AG04450 (cell line): ENCODE measurements at regions of chr2 and their contacts with region 1.

Region 1: GRCh38 chr2:85772019-85772745 is 18.4 kb downstream of the ATOH8 start:
- DNase-seq: peak; percentile 100
- H3K4me3 ChIP-seq: peak overlapping the region; percentile 25
- H3K27ac ChIP-seq: peak overlapping the region; percentile 97
- H3K27me3 ChIP-seq: no peaks in the 10 kb centered on the region
- CTCF ChIP-seq: peak; percentile 30; the same call in 1 of the 2 replicates

Region 2: DNA sequence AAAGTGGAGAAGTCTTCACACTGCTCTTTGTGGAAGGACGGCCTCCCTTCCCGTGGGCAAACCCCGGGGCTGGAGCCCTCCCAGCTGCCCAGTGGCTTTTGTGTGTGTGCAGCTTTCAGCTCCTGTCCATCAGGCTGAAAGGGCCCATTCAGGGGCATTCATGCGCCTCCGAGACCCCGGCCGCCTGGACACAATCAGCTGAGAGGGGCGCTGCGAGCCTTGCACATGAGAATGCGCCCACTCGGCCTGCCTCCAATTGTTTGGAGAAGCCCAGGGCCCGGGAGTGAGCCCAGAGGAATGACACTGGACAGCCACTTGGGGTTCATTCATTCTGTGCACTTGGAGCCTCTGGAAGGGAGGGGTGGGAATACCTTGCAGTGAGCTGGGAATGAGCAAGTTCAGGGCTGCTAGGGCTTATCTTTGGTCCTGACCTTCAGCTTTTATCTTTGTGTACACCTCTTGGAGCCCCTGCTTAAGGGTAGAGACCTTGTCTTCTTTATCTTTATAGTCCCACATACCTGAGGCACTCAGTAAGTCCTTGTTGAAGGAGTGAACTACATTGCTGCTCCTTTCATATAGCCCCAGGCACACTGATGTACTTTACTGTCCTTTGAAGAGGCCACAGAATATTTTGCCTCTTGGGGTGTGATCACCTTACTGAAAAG is 582.4 kb before region 1 on chr2:
- CTCF ChIA-PET with region 1: no interaction called
- POLR2A ChIA-PET with region 1: no interaction called
- DNase-seq: no peak
- H3K4me3 ChIP-seq: no peak overlapping the region
- H3K27ac ChIP-seq: no peak overlapping the region
- H3K27me3 ChIP-seq: no peaks in the 10 kb centered on the region
- CTCF ChIP-seq: no peak

Region 3: DNA sequence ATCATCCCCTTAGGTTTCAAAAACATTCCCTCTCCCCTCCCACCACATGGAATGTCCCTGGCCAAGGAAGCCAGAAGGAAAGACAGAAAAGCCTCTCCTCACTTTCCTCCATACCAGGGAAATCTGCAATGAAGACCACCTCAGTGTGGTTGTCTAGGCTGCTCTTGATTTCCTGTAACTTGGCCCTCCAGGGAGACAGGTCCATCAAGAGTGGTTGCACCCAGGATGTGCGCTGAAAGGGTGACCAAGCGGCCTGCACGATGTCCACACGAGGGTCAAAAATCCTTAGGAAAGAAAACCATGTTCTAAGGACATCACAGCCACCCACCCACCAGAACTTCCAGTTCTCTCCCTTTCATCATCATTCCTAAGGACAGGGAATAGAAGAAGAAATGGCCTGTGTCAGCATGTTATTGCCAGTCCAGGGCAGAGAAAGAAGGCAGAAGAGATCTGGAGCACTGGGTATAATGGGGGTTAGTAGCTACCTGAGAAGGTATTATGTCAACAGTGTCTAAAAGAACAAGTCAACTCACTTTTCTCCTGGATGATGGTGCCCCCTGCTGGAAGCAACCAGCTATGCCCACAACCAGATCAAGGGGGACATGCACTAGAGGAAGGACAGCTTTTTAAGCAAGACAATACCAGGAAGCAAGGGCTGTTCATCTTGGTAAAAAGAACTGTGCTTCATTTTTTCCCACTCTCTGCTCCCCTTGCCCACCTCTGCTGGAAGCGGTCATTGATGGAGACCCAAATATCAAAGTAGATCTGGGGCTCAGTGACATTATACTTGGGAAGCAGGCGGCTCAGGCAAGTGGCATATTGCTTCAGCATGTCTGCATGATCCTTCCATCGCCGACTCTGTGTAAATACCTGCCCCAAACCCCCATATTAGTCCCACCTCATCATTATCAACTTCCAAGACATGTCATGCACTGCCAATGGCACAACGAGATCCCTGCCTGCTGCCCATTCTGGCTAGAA is 220.2 kb before region 1 on chr2:
- CTCF ChIA-PET with region 1: no interaction called
- POLR2A ChIA-PET with region 1: no interaction called
- DNase-seq: no peak
- H3K4me3 ChIP-seq: no peak overlapping the region
- H3K27ac ChIP-seq: no peak overlapping the region
- H3K27me3 ChIP-seq: no peaks in the 10 kb centered on the region
- CTCF ChIP-seq: peak; percentile 93

Region 4: DNA sequence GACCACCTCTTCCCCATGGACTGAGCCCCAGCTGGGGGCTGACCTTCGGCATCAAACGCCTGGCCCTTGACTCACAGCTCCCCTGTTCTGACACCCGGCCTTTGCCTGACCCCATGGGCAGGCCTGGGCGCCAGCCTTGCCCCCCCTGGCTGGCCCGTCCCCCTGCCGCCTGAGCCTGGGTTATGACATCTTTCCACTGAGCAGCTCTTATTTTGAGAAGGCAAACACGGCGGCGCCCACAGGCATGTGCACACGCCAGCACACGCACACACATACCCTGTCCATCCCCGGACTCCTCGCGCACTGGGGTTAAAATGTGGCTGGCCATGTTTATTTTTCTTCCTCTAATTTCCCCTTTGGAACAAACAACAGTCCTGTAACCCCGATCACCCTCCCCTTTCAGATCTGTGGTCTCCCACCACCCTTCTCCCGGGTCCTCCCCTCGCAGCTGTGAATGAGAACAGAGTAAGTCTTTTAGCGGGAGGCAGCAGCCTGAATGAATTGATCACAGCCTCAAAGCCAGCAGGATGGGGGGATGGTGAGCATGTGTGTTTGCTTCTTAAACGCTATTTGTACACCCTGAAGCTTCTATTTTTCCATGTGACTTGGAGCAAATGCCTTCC is 30.2 kb before region 1 on chr2:
- CTCF ChIA-PET with region 1: interaction called, 5 read pairs
- POLR2A ChIA-PET with region 1: interaction called, 75 read pairs
- DNase-seq: peak; percentile 89
- H3K4me3 ChIP-seq: peak overlapping the region; percentile 32
- H3K27ac ChIP-seq: peak overlapping the region; percentile 97
- H3K27me3 ChIP-seq: no peaks in the 10 kb centered on the region
- CTCF ChIP-seq: no peak; the same call in 1 of the 2 replicates

Region 5: DNA sequence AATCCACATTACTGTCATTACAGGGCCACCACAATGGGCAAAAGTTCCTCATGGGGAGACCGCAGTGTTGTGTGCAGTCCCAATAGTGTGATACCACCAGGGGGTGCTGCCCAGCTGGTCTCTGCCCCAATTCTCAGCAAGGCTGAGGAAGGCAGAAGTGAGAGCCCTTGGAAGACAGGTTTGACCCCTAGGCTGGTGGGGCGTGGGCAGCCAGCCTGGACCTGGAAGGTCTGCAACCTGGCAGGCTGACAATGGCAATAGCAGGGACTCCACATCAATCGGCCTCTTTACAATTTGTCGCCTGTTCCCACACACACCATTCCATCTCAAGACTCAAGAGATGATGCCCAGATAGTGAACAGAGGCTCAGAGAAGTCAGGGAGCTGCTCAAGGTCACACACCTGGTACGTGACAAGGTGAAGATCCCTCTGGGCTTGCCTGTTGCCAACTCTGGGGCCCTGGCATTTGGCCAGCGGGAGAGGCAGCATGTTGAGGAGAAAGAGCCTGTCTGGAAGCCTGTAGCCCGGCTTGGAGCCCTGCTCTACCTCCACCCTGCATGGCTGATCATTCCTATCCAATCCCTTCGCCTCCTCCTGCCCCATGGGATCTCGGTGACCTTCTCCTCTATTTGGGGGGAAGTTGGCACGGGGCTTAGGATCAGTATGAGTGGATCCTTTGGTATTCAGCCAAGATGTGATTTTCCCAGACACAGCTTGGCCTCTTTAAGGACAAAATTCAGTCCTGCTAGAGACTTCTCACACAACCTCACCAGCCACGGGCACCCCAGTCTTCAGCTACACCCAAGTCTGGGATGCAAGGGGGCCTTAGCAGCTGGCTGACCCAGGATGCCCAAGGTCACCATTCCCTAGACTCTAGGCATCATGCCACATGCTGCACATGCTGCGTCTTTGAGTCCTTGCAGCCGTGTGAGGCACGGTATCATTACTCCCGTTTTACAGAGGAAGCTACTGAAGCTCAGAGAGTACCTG is 21.3 kb before region 1 on chr2:
- CTCF ChIA-PET with region 1: interaction called, 10 read pairs
- POLR2A ChIA-PET with region 1: interaction called, 22 read pairs
- DNase-seq: no peak
- H3K4me3 ChIP-seq: no peak overlapping the region
- H3K27ac ChIP-seq: no peak overlapping the region
- H3K27me3 ChIP-seq: peaks cover 5% of the 10 kb centered on the region
- CTCF ChIP-seq: peak; percentile 86

Region 6: DNA sequence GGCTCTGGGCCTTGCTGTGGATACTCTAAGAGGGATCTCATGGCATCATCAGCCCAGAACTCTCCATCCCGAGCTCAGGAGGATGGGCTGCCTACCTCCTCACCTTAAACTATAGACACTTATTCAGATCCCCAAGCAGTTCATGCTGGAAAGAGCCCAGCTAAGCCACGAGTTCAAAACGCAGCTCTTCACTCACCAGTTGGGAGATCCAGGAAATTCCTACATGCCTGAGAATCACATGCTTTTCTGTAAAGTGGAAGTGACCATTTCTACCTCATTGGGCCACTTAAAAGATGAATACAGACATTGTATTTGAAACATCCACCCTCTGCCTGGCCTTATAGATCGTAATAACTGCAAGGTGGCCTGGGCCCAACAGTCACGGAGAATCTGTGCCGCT is 11.8 kb before region 1 on chr2:
- CTCF ChIA-PET with region 1: no interaction called
- POLR2A ChIA-PET with region 1: interaction called, 19 read pairs
- DNase-seq: no peak
- H3K4me3 ChIP-seq: no peak overlapping the region
- H3K27ac ChIP-seq: no peak overlapping the region
- H3K27me3 ChIP-seq: no peaks in the 10 kb centered on the region
- CTCF ChIP-seq: no peak

Region 7: DNA sequence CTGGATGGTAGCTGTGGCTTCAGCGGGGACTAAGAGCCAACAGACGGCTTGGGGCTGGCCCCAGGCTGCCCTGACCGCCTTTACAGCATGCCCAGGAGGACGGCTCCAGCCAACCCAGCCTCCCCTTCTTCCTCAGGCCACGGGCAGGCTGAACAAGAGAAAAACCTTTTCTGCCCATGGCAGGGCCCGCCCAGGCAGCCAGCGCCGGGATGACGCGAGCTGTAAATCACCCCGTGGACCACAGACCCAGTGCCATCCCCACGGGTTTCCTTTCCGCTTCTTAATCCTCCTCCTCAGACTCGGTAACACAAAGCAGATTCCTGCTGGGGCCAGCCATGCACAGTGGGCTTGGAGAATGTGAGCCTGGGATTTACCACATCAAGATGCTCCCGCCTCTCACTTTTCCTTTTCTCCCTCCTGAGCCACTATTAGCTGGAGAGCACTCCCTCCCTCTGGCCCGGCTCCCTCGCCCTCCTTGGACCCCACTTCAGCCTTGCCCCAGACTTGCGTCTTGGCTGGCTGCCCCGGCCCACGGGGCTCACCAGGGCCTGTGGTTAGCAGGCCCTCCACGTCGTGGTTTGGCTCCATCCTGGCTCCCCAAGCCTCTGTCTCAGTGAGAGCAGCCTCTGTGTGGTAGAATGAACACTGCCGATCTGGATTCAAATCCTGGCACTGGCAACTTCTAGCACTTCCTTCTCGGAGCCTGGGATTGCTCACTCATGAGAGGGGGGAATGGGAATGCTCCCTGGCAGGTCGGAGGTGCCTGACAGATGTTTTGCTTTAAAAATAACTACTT is 13.0 kb after region 1 on chr2:
- CTCF ChIA-PET with region 1: no interaction called
- POLR2A ChIA-PET with region 1: interaction called, 13 read pairs
- DNase-seq: no peak
- H3K4me3 ChIP-seq: no peak overlapping the region
- H3K27ac ChIP-seq: no peak overlapping the region
- H3K27me3 ChIP-seq: no peaks in the 10 kb centered on the region
- CTCF ChIP-seq: no peak

Region 8: GRCh38 chr2:85792783-85793441 is 20.7 kb after region 1 on chr2:
- CTCF ChIA-PET with region 1: no interaction called
- POLR2A ChIA-PET with region 1: interaction called, 20 read pairs
- DNase-seq: peak; percentile 43
- H3K4me3 ChIP-seq: no peak overlapping the region
- H3K27ac ChIP-seq: peak overlapping the region; percentile 58
- H3K27me3 ChIP-seq: no peaks in the 10 kb centered on the region
- CTCF ChIP-seq: no peak

Region 9: GRCh38 chr2:85830645-85831044 is 58.5 kb after region 1 on chr2:
- CTCF ChIA-PET with region 1: no interaction called
- POLR2A ChIA-PET with region 1: no interaction called
- DNase-seq: no peak
- H3K4me3 ChIP-seq: no peak overlapping the region
- H3K27ac ChIP-seq: no peak overlapping the region
- H3K27me3 ChIP-seq: peaks cover 2% of the 10 kb centered on the region
- CTCF ChIP-seq: no peak